ENCODE measurements at regions of chr13 and their contacts with region 1.

Region 1: GRCh38 chr13:35838356-35838755 is 292.8 kb downstream of the DCLK1 start:
- DNase-seq: no peak
- H3K4me3 ChIP-seq: no peak overlapping the region
- H3K4me3 Mint-ChIP-seq: no peak overlapping the region
- H3K27ac Mint-ChIP-seq: no peak overlapping the region
- H3K4me1 ChIP-seq: no peaks in the 10 kb centered on the region
- H3K4me1 Mint-ChIP-seq: no peaks in the 10 kb centered on the region
- H3K27me3 ChIP-seq: peaks cover 1% of the 10 kb centered on the region; the same call in 1 of the 2 replicates
- H3K27me3 Mint-ChIP-seq: peaks cover 7% of the 10 kb centered on the region
- CTCF ChIP-seq: no peak

Region 2: DNA sequence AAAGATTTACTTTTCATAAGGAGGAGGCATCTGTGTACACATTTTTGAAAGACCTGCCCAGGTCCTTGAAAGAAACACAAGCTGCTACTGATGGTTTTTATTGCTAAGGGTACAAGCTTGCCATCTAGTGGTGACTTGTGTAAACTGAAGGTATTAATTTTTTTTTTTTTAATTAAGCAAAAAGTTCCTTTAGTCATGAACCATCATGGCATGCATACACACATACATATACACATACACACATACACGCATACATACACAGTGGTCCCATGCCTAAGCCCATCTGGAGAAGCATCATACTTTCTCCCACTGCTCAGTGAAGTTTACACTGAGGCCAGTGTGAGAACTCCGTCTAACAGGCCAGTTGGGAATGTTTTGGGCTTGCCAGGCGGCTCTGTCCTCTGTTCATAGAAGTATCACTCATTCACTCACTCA is 19.7 kb before region 1 on chr13:
- CTCF ChIA-PET with region 1: no interaction called
- POLR2A ChIA-PET with region 1: no interaction called
- intact Hi-C with region 1: no loop called
- DNase-seq: no peak
- H3K4me3 ChIP-seq: no peak overlapping the region
- H3K4me3 Mint-ChIP-seq: no peak overlapping the region
- H3K27ac Mint-ChIP-seq: no peak overlapping the region
- H3K4me1 ChIP-seq: no peaks in the 10 kb centered on the region
- H3K4me1 Mint-ChIP-seq: no peaks in the 10 kb centered on the region
- H3K27me3 ChIP-seq: no peaks in the 10 kb centered on the region
- H3K27me3 Mint-ChIP-seq: no peaks in the 10 kb centered on the region
- CTCF ChIP-seq: peak; percentile 51 to 68

Region 3: DNA sequence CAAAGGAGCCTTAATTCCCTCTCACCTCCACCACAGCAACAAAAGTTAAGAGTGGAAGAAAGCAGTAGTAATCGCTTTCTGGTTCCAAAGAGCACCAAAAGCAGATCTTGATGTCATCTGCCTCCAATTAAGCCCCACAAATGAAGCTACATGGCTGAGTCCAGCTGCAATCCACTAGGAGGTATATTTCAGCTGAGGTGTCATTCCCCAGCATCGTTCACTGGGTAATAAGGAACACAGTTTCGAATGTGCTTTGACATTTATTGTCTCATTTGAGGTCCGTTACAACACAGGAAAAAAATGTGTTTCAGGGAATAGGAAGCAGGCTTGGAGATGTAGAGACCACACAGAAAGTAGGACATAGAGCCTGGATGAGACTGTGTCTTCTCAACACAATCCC is 102.4 kb after region 1 on chr13:
- CTCF ChIA-PET with region 1: interaction called, 4 read pairs
- POLR2A ChIA-PET with region 1: no interaction called
- intact Hi-C with region 1: loop called (anchors 10 kb)
- DNase-seq: no peak
- H3K4me3 ChIP-seq: no peak overlapping the region
- H3K4me3 Mint-ChIP-seq: no peak overlapping the region
- H3K27ac Mint-ChIP-seq: no peak overlapping the region
- H3K4me1 ChIP-seq: no peaks in the 10 kb centered on the region
- H3K4me1 Mint-ChIP-seq: no peaks in the 10 kb centered on the region
- H3K27me3 ChIP-seq: no peaks in the 10 kb centered on the region
- H3K27me3 Mint-ChIP-seq: peaks cover 9% of the 10 kb centered on the region
- CTCF ChIP-seq: no peak

Measured in Caco-2 (cell line).